ENCODE measurements at regions of chr5 and their contacts with region 1.

Region 1: GRCh38 chr5:77143998-77144836 is 57.1 kb upstream of the ZBED3 start:
- DNase-seq: peak; percentile 79
- H3K4me3 Mint-ChIP-seq: no peak overlapping the region
- H3K27ac Mint-ChIP-seq: no peak overlapping the region
- H3K4me1 Mint-ChIP-seq: peaks cover 26% of the 10 kb centered on the region
- H3K27me3 Mint-ChIP-seq: peaks cover 18% of the 10 kb centered on the region

Region 2: DNA sequence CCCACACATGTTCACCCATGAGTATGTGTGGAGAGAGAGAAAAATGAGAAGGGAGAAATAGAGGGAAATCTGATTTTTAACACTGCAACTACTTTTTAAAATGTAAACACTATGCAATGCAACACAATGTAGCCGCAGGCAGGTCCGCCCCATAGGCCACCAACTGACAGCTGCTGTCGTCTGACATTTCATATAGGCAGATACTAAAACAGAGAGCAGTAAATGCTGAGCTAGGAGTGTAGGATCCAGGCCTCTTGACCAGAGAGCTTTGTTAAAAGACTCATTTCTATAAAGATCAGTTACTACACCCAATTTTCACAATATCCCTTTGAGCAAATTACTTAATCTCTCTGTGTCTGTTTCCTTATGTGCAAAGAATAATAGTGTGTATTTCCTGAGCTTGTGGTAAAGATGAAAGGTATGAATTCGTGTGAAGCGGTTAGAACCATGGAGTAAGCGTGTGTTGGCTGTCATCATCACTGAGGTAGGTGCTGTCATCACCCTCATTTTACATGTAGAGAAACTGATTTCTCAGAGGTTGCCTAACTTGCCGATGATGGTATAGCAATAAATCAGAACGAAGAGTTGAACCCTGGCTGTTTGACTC is 11.1 kb after region 1 on chr5:
- CTCF ChIA-PET with region 1: interaction called, 10 read pairs
- DNase-seq: peak; percentile 65
- H3K4me3 Mint-ChIP-seq: no peak overlapping the region
- H3K27ac Mint-ChIP-seq: peak overlapping the region; percentile 5
- H3K4me1 Mint-ChIP-seq: peaks cover 37% of the 10 kb centered on the region
- H3K27me3 Mint-ChIP-seq: peaks cover 19% of the 10 kb centered on the region

Region 3: DNA sequence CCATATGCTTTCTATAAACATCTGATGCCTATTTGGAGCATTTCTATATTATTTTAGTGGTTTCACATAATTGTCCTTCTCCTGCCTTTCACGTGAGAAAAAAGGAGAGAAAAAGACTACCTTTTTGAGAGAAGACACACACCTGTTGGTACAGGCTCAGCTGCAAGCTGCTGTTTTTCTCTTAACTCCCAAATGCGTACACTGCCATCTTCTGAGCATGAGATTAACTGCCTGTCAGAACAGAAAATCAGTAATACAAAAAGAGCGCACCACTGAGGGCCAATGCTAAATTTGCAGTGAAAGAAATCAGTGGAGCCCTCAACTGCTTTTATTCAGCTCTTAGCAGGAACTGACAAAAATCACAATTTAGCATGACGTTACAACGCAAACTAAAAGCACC is 293.0 kb after region 1 on chr5:
- CTCF ChIA-PET with region 1: interaction called, 21 read pairs
- DNase-seq: peak; percentile 23
- H3K4me3 Mint-ChIP-seq: no peak overlapping the region
- H3K27ac Mint-ChIP-seq: no peak overlapping the region
- H3K4me1 Mint-ChIP-seq: no peaks in the 10 kb centered on the region
- H3K27me3 Mint-ChIP-seq: no peaks in the 10 kb centered on the region

Region 4: DNA sequence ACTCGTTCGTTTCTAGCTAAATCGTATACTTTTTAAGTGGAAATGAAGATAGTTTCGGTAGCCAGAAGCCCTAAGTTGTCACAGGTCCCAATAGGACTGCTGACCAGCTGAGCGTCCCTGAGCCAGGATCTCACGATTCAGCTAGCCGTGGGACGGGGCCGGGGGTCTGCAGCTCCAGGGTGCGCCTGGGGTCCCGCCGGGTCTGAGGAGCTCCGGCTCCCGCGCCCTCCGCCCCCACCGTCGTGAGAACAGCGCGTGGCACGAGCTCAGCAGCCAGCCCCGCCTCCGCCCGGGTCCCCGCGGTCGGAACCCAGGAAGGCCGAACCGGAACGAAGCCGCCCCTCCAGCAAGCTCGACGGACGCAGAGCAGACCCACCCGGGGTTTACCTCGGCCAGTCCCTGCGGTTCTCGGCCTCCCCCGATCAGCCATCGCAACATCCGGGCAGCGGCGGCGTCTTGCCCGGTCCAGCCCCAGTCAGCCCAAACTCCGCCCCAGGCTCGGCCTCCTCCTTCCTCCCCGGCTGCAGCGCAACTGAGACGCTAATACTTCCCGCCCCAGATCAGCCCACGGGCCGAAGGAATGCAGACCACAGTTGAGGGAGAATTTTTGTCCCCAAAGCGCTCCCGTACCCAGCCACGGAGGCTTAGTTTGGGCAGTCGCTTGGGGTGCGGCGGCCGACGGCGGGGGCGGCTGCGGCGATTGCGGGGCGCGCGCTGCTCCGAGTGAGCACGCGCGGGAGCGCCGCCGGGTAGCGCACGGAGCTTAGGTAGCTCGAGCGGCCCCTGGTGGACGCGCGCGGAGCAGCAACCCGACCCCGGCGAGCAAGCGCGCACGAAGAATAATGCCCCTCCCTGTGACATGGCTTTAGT is 347.8 kb after region 1 on chr5 and contains the start of gene WDR41:
- CTCF ChIA-PET with region 1: interaction called, 30 read pairs
- DNase-seq: peak; percentile 87
- H3K4me3 Mint-ChIP-seq: peak within 1 kb of the TSS; percentile 78
- H3K27ac Mint-ChIP-seq: peak within 1 kb of the TSS; percentile 90
- H3K4me1 Mint-ChIP-seq: peaks cover 30% of the 10 kb centered on the region
- H3K27me3 Mint-ChIP-seq: peaks cover 17% of the 10 kb centered on the region

Measured in activated naive CD4-positive, alpha-beta T cell treated with anti-CD3 and anti-CD28 coated beads, Interleukin-2, amount 10 ng/mL, durations not matched to agents 7 days and 5 days (primary cell).